ENCODE measurements at regions of chr3 and their contacts with region 1.

Region 1: DNA sequence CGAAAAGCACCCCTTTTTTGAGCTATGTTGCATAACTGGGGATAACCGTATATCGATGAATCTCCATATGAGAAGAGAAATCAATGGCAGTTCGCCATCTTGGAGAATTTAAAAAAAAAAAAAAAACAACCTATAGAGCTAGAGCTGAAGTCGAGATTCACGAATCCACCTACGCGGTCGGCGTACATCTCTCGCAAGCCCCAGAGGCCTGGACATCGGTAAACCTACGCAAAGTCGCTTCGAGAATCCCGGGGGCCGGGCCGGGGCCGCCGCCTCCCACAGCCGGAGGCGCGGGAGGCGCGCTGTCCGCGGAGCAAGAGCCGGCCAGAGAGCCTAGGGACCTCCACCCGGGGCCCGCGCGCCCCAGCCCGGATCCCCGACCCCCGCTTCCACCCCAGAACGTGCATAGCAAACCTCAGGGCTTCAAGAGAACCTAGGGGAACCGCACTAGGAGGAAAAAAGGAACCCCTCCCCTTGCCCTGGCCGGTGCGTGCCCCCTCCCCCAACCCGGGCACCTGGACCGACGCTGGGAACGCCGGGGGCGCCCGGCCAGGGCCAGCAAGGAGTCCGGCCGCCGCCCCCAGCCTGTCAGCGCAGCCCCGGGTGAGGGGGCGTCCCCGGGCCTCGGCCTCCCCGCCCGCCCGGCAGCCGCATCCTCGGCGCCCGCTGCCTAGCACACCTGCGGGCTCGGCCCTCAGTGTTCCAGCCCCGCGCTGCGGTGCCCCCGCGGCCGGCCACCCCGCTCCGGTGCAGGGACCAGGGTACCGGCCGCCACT is 567 bp downstream of the PFN2 start:
- DNase-seq: peak; percentile 85 to 95
- ATAC-seq: peak; percentile 87
- H3K4me3 ChIP-seq: peak overlapping the region; percentile 66 to 98
- H3K27ac ChIP-seq: peak overlapping the region; percentile 80 to 98
- H3K4me1 ChIP-seq: peaks cover 0 to 5% of the 10 kb centered on the region in 2 donors
- H3K27me3 ChIP-seq: no peaks in the 10 kb centered on the region

Region 2: GRCh38 chr3:149879872-149880271 is 90.3 kb before region 1 on chr3:
- intact Hi-C with region 1: loop called in 1 of 2 experiments (anchors 10 kb)
- DNase-seq: peak; percentile 77 to 84
- ATAC-seq: peak; percentile 70
- H3K4me3 ChIP-seq: no peak overlapping the region
- H3K27ac ChIP-seq: no peak overlapping the region
- H3K4me1 ChIP-seq: no peaks in the 10 kb centered on the region
- H3K27me3 ChIP-seq: no peaks in the 10 kb centered on the region

Region 3: GRCh38 chr3:150079029-150079739 is 109.1 kb after region 1 on chr3:
- intact Hi-C with region 1: loop called in 1 of 2 experiments (anchors 5 kb)
- DNase-seq: peak; percentile 70 to 76
- ATAC-seq: no peak
- H3K4me3 ChIP-seq: no peak overlapping the region
- H3K27ac ChIP-seq: no peak overlapping the region
- H3K4me1 ChIP-seq: peaks cover 0 to 6% of the 10 kb centered on the region in 2 donors
- H3K27me3 ChIP-seq: no peaks in the 10 kb centered on the region

Region 4: GRCh38 chr3:150183678-150184425 is 213.7 kb after region 1 on chr3:
- intact Hi-C with region 1: loop called (anchors 1 kb)
- DNase-seq: peak; percentile 78 to 86
- ATAC-seq: peak; percentile 92
- H3K4me3 ChIP-seq: no peak overlapping the region
- H3K27ac ChIP-seq: no peak overlapping the region
- H3K4me1 ChIP-seq: no peaks in the 10 kb centered on the region
- H3K27me3 ChIP-seq: no peaks in the 10 kb centered on the region

Region 5: DNA sequence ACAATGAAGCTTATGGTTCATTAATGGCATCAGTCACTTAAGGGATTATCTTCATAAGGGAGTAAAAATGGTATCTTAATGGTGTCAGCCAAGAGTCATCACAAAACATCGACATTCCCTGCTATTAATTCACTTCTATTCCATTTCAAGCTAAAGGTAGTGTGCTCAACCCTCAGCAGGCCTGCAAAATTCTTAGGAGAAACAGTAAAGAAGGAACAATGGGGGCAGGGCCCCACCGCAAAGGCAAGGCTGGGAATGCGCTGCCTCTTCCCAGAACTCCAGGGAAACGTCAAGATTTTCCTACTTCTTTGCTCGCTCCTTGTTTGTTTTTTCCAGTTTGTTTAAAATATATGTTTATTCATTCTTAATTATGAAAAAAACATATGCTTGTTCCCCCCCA is 250.7 kb after region 1 on chr3:
- intact Hi-C with region 1: loop called (anchors 2 to 10 kb)
- DNase-seq: no peak
- ATAC-seq: no peak
- H3K4me3 ChIP-seq: peak overlapping the region; percentile 15 to 38
- H3K27ac ChIP-seq: no peak overlapping the region
- H3K4me1 ChIP-seq: peaks cover 0 to 3% of the 10 kb centered on the region in 2 donors
- H3K27me3 ChIP-seq: no peaks in the 10 kb centered on the region

Region 6: DNA sequence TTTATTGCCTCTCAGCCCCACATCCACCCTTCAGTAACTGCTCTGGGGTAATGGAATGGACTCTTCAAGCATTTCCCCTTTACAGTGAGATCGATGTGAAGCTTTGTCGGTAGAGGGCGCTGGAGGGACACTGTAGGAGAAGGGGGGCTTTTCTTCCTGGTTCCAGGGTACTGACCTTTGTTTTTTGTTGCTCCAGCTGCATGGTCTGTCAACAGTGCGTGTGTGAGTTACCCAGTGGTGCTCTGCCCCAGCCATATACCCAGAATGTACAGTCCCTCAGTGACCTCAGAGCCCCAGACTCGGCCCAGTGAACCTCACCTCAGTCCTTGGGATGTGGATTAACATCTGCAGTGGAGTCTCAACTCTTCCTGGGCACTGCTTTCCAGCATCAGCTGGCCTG is 257.7 kb after region 1 on chr3:
- intact Hi-C with region 1: loop called in 1 of 2 experiments (anchors 10 kb)
- DNase-seq: peak in 1 of 2 donors; percentile 64
- ATAC-seq: no peak
- H3K4me3 ChIP-seq: no peak overlapping the region
- H3K27ac ChIP-seq: no peak overlapping the region
- H3K4me1 ChIP-seq: no peaks in the 10 kb centered on the region
- H3K27me3 ChIP-seq: no peaks in the 10 kb centered on the region

Region 7: GRCh38 chr3:150495563-150496168 is 525.5 kb after region 1 on chr3:
- intact Hi-C with region 1: loop called (anchors 2 to 5 kb)
- DNase-seq: no peak
- ATAC-seq: peak; percentile 66
- H3K4me3 ChIP-seq: no peak overlapping the region
- H3K27ac ChIP-seq: no peak overlapping the region
- H3K4me1 ChIP-seq: no peaks in the 10 kb centered on the region
- H3K27me3 ChIP-seq: no peaks in the 10 kb centered on the region